Mammary epithelial cell (primary cell): ENCODE measurements at regions of chr1 and their contacts with region 1.

Region 1: DNA sequence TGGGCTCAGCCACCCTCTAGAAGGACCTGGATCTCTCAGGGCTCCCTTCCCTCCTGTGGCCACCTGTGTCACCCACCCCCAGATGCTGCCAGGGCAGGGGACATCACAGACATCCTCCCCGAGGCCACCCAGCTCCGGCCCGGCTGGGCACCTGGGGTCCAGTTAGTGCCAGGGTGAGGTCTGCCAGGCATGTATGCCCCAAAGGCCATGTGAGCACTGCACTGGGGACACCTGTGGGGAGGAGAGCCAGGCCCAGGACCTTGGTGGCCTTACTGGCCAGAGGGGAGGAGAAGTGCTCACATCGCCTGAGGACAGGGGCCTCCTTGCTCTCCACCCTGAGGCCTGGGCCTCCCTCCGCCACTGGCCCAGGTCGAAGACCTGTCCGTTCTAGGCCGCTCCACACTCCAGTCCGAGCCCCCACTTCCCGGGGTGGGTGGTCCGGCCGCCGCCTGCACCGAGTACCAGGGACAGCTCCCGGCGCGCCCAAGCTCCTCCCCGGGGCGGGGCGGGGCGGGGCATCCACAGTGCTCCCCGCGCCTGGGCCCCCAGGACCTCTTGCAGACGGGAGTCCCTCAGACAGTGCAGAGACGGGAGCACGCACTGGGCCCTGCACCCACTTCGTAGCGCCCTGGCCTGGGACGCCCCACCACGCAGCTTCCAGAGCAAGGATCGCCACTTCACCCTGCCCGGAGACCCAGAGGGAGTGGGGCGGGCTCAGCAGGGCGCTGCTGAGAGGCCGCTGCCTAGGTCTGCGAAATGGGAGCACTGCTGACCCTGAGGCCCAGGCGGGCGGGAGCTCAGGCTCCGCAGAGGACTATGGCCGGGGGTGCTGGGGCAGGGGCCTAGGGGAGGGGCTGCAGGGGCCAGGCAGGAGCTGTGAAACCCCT is 34.3 kb upstream of the CCDC27 start:
- DNase-seq: no peak
- H3K4me3 ChIP-seq: no peak overlapping the region
- H3K27ac ChIP-seq: no peak overlapping the region
- H3K4me1 ChIP-seq: peaks cover 36% of the 10 kb centered on the region
- H3K27me3 ChIP-seq: no peaks in the 10 kb centered on the region
- CTCF ChIP-seq: no peak

Region 2: GRCh38 chr1:3624200-3625136 is 93.5 kb before region 1 on chr1 and contains the start of gene TPRG1L:
- CTCF ChIA-PET with region 1: no interaction called
- dilution Hi-C with region 1: no loop called
- in situ Hi-C with region 1: loop called in 1 of 2 experiments (anchors 10 kb)
- intact Hi-C with region 1: no loop called
- DNase-seq: peak; percentile 94
- H3K4me3 ChIP-seq: peak within 1 kb of the TSS; percentile 75 to 100 (median 77)
- H3K27ac ChIP-seq: no peak within 1 kb of the TSS
- H3K4me1 ChIP-seq: peaks cover 18% of the 10 kb centered on the region
- H3K27me3 ChIP-seq: no peaks in the 10 kb centered on the region
- CTCF ChIP-seq: no peak
- total RNA-seq, gene TPRG1L: 44.2 to 48.6 TPM

Region 3: GRCh38 chr1:3690282-3691065 is 27.5 kb before region 1 on chr1:
- CTCF ChIA-PET with region 1: no interaction called
- dilution Hi-C with region 1: no loop called
- in situ Hi-C with region 1: no loop called
- intact Hi-C with region 1: loop called (anchors 1 kb)
- DNase-seq: peak; percentile 85
- H3K4me3 ChIP-seq: peak overlapping the region; percentile 6 to 55 (median 43)
- H3K27ac ChIP-seq: no peak overlapping the region
- H3K4me1 ChIP-seq: peaks cover 20% of the 10 kb centered on the region
- H3K27me3 ChIP-seq: no peaks in the 10 kb centered on the region
- CTCF ChIP-seq: no peak

Region 4: DNA sequence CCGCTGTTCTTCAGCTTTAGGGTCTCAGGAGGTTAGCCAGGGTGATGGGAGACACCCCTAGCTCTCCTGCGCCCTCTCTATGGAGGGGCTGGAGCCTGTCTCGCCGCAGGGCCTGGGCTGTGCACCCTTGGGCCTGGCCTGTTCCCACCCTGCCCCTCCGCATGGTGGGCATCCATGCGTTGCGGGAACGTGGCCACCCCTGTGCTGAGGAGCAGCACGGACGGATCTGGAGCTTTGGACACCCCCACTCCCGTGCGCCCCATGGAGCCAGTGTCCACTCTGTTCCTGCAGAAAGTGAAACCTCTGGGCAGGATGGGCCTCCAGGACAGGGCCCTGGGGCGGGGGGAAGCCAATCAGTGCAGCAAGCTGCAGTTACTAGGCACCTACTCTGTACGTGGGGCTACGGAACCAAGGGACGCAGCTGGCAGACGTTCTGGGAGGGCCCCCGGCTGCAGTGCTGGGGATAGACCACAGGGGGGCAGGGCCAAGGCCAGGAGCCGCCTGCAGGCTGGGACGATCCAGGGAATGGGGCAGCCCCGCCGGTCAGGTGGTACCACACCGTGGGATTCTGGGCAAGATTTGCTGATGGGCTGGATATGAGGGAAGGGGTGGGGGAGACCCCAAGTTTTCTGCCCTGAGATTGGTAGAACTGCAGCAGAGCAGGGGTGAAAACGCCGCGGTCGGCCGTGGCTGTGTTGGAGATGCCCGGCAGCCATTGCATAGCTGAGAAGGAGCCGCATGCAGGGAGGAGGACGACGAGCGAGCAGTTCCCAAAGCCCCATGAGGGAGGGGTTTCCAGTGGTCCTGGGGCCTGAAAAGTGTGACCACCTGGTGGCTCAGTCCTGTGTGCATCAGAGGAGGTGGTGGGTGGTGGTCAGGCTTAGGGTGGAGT is 22.4 kb before region 1 on chr1:
- CTCF ChIA-PET with region 1: no interaction called
- dilution Hi-C with region 1: no loop called
- in situ Hi-C with region 1: no loop called
- intact Hi-C with region 1: loop called (anchors 1 kb)
- DNase-seq: no peak
- H3K4me3 ChIP-seq: no peak overlapping the region
- H3K27ac ChIP-seq: no peak overlapping the region
- H3K4me1 ChIP-seq: peaks cover 35% of the 10 kb centered on the region
- H3K27me3 ChIP-seq: no peaks in the 10 kb centered on the region
- CTCF ChIP-seq: peak; percentile 76 to 84

Region 5: DNA sequence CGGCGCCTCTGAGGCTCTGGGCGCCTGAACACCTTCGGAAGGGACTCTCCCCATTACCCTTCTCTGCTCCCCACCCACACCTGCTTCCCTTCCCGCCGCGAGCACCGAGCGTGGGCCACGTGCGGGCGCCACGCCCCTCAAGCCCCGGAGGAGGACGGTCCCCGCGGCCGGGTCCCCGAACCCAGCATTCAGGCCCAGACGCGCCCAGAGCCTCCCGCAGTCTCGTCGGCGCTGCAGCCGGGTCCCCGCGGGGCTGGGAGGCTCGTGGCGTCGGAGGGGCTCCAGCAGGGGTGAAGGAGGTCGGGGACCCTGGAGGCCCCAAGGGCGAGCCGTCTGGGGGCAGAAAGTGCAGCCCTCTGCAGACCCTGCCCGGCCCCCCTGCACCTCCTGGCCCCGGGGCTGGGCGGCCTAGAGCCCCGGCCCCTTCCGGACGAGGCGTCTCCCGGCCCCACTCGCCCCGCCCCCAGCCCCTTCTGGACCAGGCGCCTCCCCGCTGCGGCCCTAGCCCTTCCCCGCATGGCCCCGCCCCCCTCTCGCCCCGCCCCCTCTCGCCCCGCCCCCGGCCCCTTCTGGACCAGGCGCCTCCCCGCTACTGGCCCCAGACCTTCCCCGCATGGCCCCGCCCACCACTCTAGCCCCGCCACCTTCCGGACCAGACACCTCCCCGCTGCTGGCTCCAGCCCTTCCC is 54.2 kb after region 1 on chr1:
- CTCF ChIA-PET with region 1: no interaction called
- dilution Hi-C with region 1: loop called (anchors 5 kb)
- in situ Hi-C with region 1: no loop called
- intact Hi-C with region 1: no loop called
- DNase-seq: peak; percentile 56
- H3K4me3 ChIP-seq: peak overlapping the region; percentile 44 to 58 (median 57)
- H3K27ac ChIP-seq: no peak overlapping the region
- H3K4me1 ChIP-seq: peaks cover 18% of the 10 kb centered on the region
- H3K27me3 ChIP-seq: no peaks in the 10 kb centered on the region
- CTCF ChIP-seq: no peak